CD8-positive, alpha-beta T cell (primary cell): ENCODE measurements at regions of chr1 and their contacts with region 1.

Region 1: DNA sequence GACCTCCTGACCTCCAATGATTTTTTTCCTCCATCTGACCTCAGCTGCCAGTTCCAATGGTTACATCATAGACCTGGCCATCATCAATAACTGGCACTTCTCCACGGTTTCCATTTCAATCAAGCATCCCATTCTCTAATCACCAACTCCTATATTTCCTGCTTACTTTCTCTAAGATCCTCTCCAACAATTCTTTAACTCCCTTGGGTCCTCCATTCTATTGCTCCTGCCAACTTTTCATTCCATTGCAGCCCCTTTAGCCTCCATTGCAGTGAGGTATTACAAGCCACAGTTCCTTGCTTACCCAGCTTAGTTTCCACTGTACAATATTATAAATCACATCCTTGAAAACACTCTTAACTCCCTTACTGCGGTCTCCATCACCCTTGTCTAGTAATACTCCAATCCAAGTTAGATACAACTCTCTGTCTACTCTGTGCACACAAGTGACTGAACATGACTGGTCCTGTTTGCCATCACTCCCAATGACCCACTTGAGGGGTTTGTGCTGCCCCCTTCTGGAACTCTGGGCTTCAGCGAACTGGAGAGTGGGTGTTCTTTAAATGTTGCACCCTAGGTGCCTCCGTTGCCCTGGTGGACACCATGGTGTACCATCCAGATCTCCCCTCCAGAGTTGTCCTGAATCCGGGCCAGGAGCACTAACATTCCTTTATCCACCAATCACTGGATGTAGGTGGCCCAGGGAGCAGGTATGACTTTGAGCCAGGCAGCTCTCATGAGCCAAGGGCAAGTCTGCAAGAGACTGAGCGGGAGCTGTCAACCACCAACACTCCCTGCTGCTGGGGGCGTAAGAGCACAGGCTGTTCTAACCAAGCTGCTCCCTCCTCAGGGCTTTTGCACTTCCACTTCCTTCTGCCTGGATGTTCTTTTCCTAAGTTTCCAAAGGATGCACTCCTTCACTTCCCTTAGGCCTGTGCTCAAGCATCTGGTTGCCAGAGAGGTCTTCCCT is 3.7 kb upstream of the FNDC7 start:
- DNase-seq: peak; percentile 44 to 83 (median 71)
- ATAC-seq: peak; percentile 83
- H3K4me3 ChIP-seq: no peak overlapping the region
- H3K4me3 Mint-ChIP-seq: no peak overlapping the region
- H3K27ac ChIP-seq: no peak overlapping the region
- H3K27ac Mint-ChIP-seq: no peak overlapping the region
- H3K4me1 ChIP-seq: peaks cover 16% of the 10 kb centered on the region
- H3K4me1 Mint-ChIP-seq: peaks cover 30% of the 10 kb centered on the region
- H3K27me3 ChIP-seq: no peaks in the 10 kb centered on the region
- H3K27me3 Mint-ChIP-seq: no peaks in the 10 kb centered on the region
- CTCF ChIP-seq: peak; percentile 57

Region 2: DNA sequence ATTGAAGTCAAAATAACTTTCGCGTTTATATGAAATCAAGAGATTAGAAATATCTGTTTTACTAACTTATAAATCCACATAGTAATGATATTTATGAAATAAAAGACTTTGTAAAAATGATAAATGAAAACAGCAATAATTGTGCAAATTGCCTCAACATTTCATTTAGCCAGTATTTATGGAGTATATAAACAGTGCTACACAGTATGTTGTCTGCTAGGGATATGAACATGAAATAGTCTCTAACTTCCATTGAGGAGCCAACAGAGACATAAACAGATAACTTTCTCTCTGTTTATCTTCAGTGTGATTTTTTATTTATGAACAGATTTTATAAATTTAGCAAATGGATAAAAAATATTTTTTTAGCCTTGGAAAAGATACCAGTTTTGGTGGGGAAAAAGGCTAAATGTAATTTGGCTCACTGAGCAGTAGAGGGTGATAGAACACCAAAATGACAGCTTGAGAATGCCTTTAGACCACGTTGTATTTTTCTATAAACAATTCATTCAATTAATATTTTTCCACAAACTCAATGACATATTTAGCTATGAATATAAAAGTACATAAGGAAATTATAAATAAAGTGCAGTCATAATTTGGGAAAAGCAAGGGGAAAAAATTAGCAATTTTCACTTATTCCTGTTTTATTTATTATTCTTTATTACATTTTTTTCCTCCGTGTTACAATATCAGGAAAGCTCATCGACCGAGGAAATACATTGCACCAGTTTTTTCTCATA is 196.6 kb before region 1 on chr1:
- CTCF ChIA-PET with region 1: no interaction called
- POLR2A ChIA-PET with region 1: no interaction called
- intact Hi-C with region 1: loop called (anchors 1 to 2 kb)
- DNase-seq: peak in 2 of 9 experiments; percentile 65 to 75
- ATAC-seq: peak; percentile 69
- H3K4me3 ChIP-seq: no peak overlapping the region
- H3K4me3 Mint-ChIP-seq: no peak overlapping the region
- H3K27ac ChIP-seq: no peak overlapping the region
- H3K27ac Mint-ChIP-seq: no peak overlapping the region
- H3K4me1 ChIP-seq: no peaks in the 10 kb centered on the region
- H3K4me1 Mint-ChIP-seq: no peaks in the 10 kb centered on the region
- H3K27me3 ChIP-seq: no peaks in the 10 kb centered on the region
- H3K27me3 Mint-ChIP-seq: peaks cover 21% of the 10 kb centered on the region
- CTCF ChIP-seq: peak; percentile 99

Region 3: GRCh38 chr1:108617008-108617723 is 91.8 kb before region 1 on chr1:
- CTCF ChIA-PET with region 1: no interaction called
- POLR2A ChIA-PET with region 1: no interaction called
- intact Hi-C with region 1: no loop called
- DNase-seq: peak in 1 of 9 experiments; percentile 8
- ATAC-seq: no peak
- H3K4me3 ChIP-seq: no peak overlapping the region
- H3K4me3 Mint-ChIP-seq: no peak overlapping the region
- H3K27ac ChIP-seq: no peak overlapping the region
- H3K27ac Mint-ChIP-seq: no peak overlapping the region
- H3K4me1 ChIP-seq: no peaks in the 10 kb centered on the region
- H3K4me1 Mint-ChIP-seq: no peaks in the 10 kb centered on the region
- H3K27me3 ChIP-seq: no peaks in the 10 kb centered on the region
- H3K27me3 Mint-ChIP-seq: no peaks in the 10 kb centered on the region
- CTCF ChIP-seq: no peak

Region 4: GRCh38 chr1:108661030-108661620 is 47.9 kb before region 1 on chr1 and contains the start of gene HENMT1:
- CTCF ChIA-PET with region 1: interaction called, 4 read pairs
- POLR2A ChIA-PET with region 1: interaction called, 25 read pairs
- intact Hi-C with region 1: no loop called
- DNase-seq: peak; percentile 62 to 95 (median 82)
- ATAC-seq: peak; percentile 84
- H3K4me3 ChIP-seq: peak within 1 kb of the TSS; percentile 57 to 66
- H3K4me3 Mint-ChIP-seq: peak within 1 kb of the TSS; percentile 81
- H3K27ac ChIP-seq: peak within 1 kb of the TSS; percentile 90 to 98
- H3K27ac Mint-ChIP-seq: peak within 1 kb of the TSS; percentile 97
- H3K4me1 ChIP-seq: peaks cover 24% of the 10 kb centered on the region
- H3K4me1 Mint-ChIP-seq: peaks cover 50% of the 10 kb centered on the region
- H3K27me3 ChIP-seq: no peaks in the 10 kb centered on the region
- H3K27me3 Mint-ChIP-seq: no peaks in the 10 kb centered on the region
- CTCF ChIP-seq: no peak
- total RNA-seq, gene HENMT1: 7.5 to 8.3 TPM

Region 5: DNA sequence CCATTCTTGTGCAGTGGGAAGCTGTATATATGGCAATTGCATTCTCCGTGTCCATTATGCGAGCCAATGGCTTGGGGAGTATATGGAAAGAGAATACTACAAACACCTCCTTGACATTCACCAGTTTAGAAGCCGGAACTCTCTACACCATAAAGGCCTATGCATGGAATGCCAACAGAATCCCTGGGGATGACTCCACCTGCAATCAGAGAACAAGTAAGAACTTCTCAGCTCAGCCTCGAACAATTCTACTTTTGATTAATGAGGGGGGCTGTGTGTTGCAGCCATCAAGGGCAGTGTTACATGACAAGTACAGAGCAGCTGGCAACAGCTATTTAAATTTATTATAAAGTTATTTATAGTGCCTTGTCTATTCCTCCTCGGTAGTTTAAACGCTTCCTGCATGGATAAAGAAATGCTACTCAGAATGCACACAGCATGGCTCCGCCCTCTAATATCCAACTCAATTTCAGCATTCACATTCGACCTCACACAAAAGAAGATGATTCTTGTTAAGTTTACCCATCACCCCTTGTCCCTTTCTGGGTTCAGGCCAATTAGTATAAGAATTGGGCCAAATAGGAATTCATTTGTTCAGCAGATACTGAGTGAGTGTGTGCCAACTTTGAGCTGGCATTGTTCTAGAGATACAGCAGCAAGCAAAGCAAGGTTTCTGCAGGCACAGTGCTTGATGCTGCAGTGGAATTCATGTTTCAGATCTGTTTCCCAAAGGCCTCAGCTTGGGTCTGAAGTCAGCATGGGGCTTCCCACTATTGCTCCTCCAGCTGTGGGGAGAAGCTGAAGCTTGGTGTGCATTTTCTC is 10.1 kb after region 1 on chr1:
- CTCF ChIA-PET with region 1: interaction called, 15 read pairs
- POLR2A ChIA-PET with region 1: interaction called, 3 read pairs
- intact Hi-C with region 1: no loop called
- DNase-seq: no peak
- ATAC-seq: no peak
- H3K4me3 ChIP-seq: no peak overlapping the region
- H3K4me3 Mint-ChIP-seq: no peak overlapping the region
- H3K27ac ChIP-seq: no peak overlapping the region
- H3K27ac Mint-ChIP-seq: no peak overlapping the region
- H3K4me1 ChIP-seq: no peaks in the 10 kb centered on the region
- H3K4me1 Mint-ChIP-seq: no peaks in the 10 kb centered on the region
- H3K27me3 ChIP-seq: no peaks in the 10 kb centered on the region
- H3K27me3 Mint-ChIP-seq: peaks cover 7% of the 10 kb centered on the region
- CTCF ChIP-seq: no peak

Region 6: GRCh38 chr1:108725906-108726305 is 16.9 kb after region 1 on chr1:
- CTCF ChIA-PET with region 1: interaction called, 15 read pairs
- POLR2A ChIA-PET with region 1: no interaction called
- intact Hi-C with region 1: no loop called
- DNase-seq: no peak
- ATAC-seq: no peak
- H3K4me3 ChIP-seq: no peak overlapping the region
- H3K4me3 Mint-ChIP-seq: no peak overlapping the region
- H3K27ac ChIP-seq: no peak overlapping the region
- H3K27ac Mint-ChIP-seq: no peak overlapping the region
- H3K4me1 ChIP-seq: no peaks in the 10 kb centered on the region
- H3K4me1 Mint-ChIP-seq: no peaks in the 10 kb centered on the region
- H3K27me3 ChIP-seq: no peaks in the 10 kb centered on the region
- H3K27me3 Mint-ChIP-seq: peaks cover 6% of the 10 kb centered on the region
- CTCF ChIP-seq: no peak

Region 7: DNA sequence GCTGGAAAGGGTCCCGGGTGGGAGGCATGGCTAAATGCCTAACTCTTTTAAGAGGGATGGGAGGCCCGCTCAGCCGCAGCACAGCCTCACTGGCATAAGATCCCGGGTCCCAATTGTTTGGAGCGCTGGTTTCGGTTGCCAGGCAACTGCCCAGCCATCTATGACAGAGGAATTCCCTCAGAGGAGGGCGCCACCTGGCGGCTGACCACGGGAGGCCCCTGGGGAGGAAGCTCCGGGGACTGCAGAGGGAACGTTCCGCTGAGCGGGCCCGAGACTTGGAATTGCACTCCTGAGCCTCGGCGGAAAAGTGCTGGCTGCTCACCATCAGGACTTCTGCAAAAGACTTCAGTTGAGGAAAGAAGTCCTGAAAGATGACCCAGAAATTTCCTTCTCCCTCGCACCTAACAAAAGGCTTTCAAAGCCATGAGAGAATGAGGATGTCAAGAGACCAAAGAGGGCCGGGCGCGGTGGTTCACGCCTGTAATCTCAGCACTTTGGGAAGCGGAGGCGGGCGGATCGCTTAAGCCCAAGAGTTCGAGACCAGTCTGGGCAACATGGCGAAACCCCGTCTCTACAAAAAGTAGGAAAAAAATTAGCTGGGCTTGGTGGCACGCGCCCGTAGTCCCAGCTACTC is 403.8 kb after region 1 on chr1:
- CTCF ChIA-PET with region 1: no interaction called
- POLR2A ChIA-PET with region 1: no interaction called
- intact Hi-C with region 1: no loop called
- DNase-seq: peak; percentile 81 to 94 (median 89)
- ATAC-seq: peak; percentile 56
- H3K4me3 ChIP-seq: peak overlapping the region; percentile 46 to 66
- H3K4me3 Mint-ChIP-seq: peak overlapping the region; percentile 83
- H3K27ac ChIP-seq: peak overlapping the region; percentile 34 to 48
- H3K27ac Mint-ChIP-seq: peak overlapping the region; percentile 81
- H3K4me1 ChIP-seq: peaks cover 22% of the 10 kb centered on the region
- H3K4me1 Mint-ChIP-seq: peaks cover 29% of the 10 kb centered on the region
- H3K27me3 ChIP-seq: peaks cover 0 to 4% of the 10 kb centered on the region in 2 experiments
- H3K27me3 Mint-ChIP-seq: peaks cover 2% of the 10 kb centered on the region
- CTCF ChIP-seq: peak; percentile 90